Natural killer cell (primary cell): ENCODE measurements at regions of chr12 and their contacts with region 1.

Region 1: DNA sequence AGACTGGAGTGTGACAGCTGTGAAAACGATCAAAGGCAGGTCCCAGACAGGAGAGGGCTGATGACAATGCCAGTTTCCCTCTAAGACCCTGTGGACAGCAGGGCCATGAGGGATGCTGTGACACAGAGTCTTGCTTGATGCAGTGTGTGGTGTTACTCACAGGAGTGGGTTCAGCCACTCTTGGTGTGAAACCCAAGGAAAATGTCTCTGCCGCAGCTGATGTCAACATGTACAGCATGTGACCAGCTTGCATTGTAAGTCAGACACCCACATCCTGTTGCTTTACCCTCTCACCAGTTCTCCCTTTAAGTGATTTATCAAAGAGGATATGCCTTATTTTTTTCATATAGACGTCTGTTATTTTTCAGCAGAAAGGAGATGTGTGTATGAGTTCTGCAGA is 268.6 kb downstream of the BTG1 start:
- DNase-seq: peak; percentile 83 to 97
- ATAC-seq: peak; percentile 81 to 94 (median 86)
- H3K4me3 ChIP-seq: no peak overlapping the region
- H3K4me3 Mint-ChIP-seq: peak overlapping the region; percentile 83
- H3K27ac ChIP-seq: peak overlapping the region; percentile 98
- H3K27ac Mint-ChIP-seq: peak overlapping the region; percentile 86 to 100
- H3K4me1 ChIP-seq: peaks cover 34% of the 10 kb centered on the region
- H3K4me1 Mint-ChIP-seq: peaks cover 72% of the 10 kb centered on the region in 2 donors
- H3K27me3 ChIP-seq: no peaks in the 10 kb centered on the region
- H3K27me3 Mint-ChIP-seq: no peaks in the 10 kb centered on the region
- CTCF ChIP-seq: no peak

Region 2: DNA sequence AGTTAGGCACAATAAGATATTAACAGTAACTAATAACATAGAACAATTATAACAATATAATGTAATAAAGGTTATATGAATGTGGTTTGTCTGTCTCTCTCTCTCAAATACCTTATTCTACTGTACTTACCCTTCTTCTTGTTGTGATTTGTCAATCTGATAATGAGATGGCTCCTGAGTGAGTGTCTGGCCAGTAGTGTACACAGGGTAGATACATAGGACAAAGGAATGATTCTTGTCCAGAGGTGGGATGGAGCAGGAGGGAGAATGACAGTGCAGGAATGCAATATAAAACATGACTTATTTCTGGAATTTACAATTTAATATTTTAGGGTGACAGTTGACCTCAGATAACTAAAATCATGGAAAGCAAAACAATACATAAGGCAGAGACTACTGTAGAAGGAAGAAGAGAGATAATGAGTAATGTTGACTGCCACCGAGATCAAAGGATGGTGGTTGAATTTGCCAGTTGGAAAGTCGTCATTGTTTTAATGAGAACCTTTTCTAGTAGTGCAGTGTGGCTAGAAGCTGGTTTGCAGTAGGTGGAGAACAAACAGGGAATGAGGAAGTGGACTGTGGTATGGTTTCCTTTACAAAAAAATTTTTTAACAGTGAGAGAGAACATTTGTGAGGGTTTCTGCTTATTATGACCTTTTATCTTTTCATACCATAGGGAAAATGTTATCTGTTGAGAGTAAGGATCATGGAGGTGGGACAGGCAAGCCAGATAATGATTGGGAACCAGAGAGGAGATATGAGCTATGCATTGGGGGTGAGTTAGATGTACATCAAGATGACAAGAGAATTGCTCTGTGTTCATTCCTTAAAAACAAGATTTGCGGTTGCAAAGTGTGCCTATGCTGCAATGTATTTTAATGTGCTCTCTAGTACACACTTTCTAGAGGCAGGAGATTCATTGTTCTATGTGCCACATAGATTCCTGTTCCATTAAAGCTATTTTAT is 189.7 kb before region 1 on chr12:
- intact Hi-C with region 1: loop called (anchors 5 kb)
- DNase-seq: peak in 1 of 2 donors; percentile 67
- ATAC-seq: peak; percentile 32 to 77 (median 70)
- H3K4me3 ChIP-seq: no peak overlapping the region
- H3K4me3 Mint-ChIP-seq: no peak overlapping the region
- H3K27ac ChIP-seq: no peak overlapping the region
- H3K27ac Mint-ChIP-seq: peak overlapping the region in 1 of 2 donors; percentile 75
- H3K4me1 ChIP-seq: no peaks in the 10 kb centered on the region
- H3K4me1 Mint-ChIP-seq: peaks cover 12 to 25% of the 10 kb centered on the region in 2 donors
- H3K27me3 ChIP-seq: no peaks in the 10 kb centered on the region
- H3K27me3 Mint-ChIP-seq: no peaks in the 10 kb centered on the region
- CTCF ChIP-seq: no peak

Region 3: GRCh38 chr12:91852634-91853033 is 24.4 kb before region 1 on chr12:
- intact Hi-C with region 1: loop called (anchors 2 kb)
- DNase-seq: no peak
- ATAC-seq: peak in 2 of 3 donors; percentile 13 to 17
- H3K4me3 ChIP-seq: no peak overlapping the region
- H3K4me3 Mint-ChIP-seq: no peak overlapping the region
- H3K27ac ChIP-seq: no peak overlapping the region
- H3K27ac Mint-ChIP-seq: peak overlapping the region in 1 of 2 donors; percentile 41
- H3K4me1 ChIP-seq: no peaks in the 10 kb centered on the region
- H3K4me1 Mint-ChIP-seq: peaks cover 21% of the 10 kb centered on the region in 2 donors
- H3K27me3 ChIP-seq: no peaks in the 10 kb centered on the region
- H3K27me3 Mint-ChIP-seq: peaks cover 2% of the 10 kb centered on the region in 2 donors
- CTCF ChIP-seq: no peak

Region 4: GRCh38 chr12:92000597-92000996 is 123.6 kb after region 1 on chr12:
- intact Hi-C with region 1: loop called (anchors 1 kb)
- DNase-seq: peak in 1 of 2 donors; percentile 61
- ATAC-seq: peak; percentile 64 to 84 (median 72)
- H3K4me3 ChIP-seq: no peak overlapping the region
- H3K4me3 Mint-ChIP-seq: peak overlapping the region; percentile 45
- H3K27ac ChIP-seq: no peak overlapping the region
- H3K27ac Mint-ChIP-seq: peak overlapping the region; percentile 68 to 76
- H3K4me1 ChIP-seq: peaks cover 3% of the 10 kb centered on the region
- H3K4me1 Mint-ChIP-seq: peaks cover 20 to 28% of the 10 kb centered on the region in 2 donors
- H3K27me3 ChIP-seq: no peaks in the 10 kb centered on the region
- H3K27me3 Mint-ChIP-seq: no peaks in the 10 kb centered on the region
- CTCF ChIP-seq: no peak

Region 5: GRCh38 chr12:92136965-92137721 is 260.1 kb after region 1 on chr12:
- intact Hi-C with region 1: loop called (anchors 2 kb)
- DNase-seq: peak in 1 of 2 donors; percentile 35
- ATAC-seq: peak in 1 of 3 donors; percentile 25
- H3K4me3 ChIP-seq: peak overlapping the region; percentile 88
- H3K4me3 Mint-ChIP-seq: peak overlapping the region; percentile 88
- H3K27ac ChIP-seq: peak overlapping the region; percentile 62
- H3K27ac Mint-ChIP-seq: peak overlapping the region; percentile 88 to 98
- H3K4me1 ChIP-seq: peaks cover 30% of the 10 kb centered on the region
- H3K4me1 Mint-ChIP-seq: peaks cover 77 to 89% of the 10 kb centered on the region in 2 donors
- H3K27me3 ChIP-seq: no peaks in the 10 kb centered on the region
- H3K27me3 Mint-ChIP-seq: no peaks in the 10 kb centered on the region
- CTCF ChIP-seq: no peak

Region 6: GRCh38 chr12:92185052-92185451 is 308.0 kb after region 1 on chr12:
- intact Hi-C with region 1: loop called (anchors 1 kb)
- DNase-seq: peak in 1 of 2 donors; percentile 70
- ATAC-seq: peak; percentile 65 to 84 (median 80)
- H3K4me3 ChIP-seq: no peak overlapping the region
- H3K4me3 Mint-ChIP-seq: peak overlapping the region; percentile 29
- H3K27ac ChIP-seq: peak overlapping the region; percentile 85
- H3K27ac Mint-ChIP-seq: peak overlapping the region; percentile 80 to 88
- H3K4me1 ChIP-seq: peaks cover 19% of the 10 kb centered on the region
- H3K4me1 Mint-ChIP-seq: peaks cover 35 to 47% of the 10 kb centered on the region in 2 donors
- H3K27me3 ChIP-seq: no peaks in the 10 kb centered on the region
- H3K27me3 Mint-ChIP-seq: no peaks in the 10 kb centered on the region
- CTCF ChIP-seq: no peak

Region 7: DNA sequence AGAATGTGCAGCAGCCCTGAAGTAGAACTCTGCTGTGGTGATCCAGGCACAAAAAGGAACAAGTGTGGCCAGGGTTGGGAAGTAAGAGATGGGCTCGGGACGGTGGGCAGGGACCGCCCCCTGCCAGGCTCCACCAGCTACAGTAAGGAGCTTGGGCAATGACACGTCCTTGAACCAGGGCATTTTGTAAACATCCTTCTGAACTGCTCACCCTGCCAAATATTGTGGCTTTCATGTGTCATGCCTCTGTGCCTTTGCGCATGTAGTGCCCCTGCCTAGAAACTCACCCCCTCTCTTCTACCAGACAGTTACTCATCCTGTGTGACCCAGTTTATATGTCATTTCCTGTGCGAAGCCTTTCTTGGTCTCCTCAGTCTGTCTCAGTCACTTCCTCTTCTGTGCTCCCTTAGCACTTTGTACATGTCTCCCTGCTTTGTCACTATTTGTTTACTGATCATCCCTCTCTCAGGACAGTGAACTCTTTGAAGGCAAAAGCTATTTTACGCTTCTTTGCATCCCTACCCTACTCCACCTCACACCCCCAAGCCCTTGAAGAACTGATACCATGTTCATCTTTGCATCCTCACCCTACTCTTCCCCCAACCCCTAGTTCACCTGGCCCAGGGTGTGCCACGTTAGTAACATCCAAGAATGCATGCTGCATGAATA is 716.8 kb after region 1 on chr12:
- intact Hi-C with region 1: loop called (anchors 1 kb)
- DNase-seq: peak; percentile 70 to 96
- ATAC-seq: peak; percentile 86 to 97 (median 91)
- H3K4me3 ChIP-seq: no peak overlapping the region
- H3K4me3 Mint-ChIP-seq: peak overlapping the region; percentile 83
- H3K27ac ChIP-seq: peak overlapping the region; percentile 99
- H3K27ac Mint-ChIP-seq: peak overlapping the region; percentile 91 to 98
- H3K4me1 ChIP-seq: peaks cover 21% of the 10 kb centered on the region
- H3K4me1 Mint-ChIP-seq: peaks cover 33 to 49% of the 10 kb centered on the region in 2 donors
- H3K27me3 ChIP-seq: no peaks in the 10 kb centered on the region
- H3K27me3 Mint-ChIP-seq: no peaks in the 10 kb centered on the region
- CTCF ChIP-seq: no peak